Colonic mucosa (tissue), 4 donors: ENCODE measurements at regions of chr7 and their contacts with region 1.

Region 1: GRCh38 chr7:31160941-31161340 is 108.8 kb downstream of the ADCYAP1R1 start:
- DNase-seq: no peak
- H3K4me3 ChIP-seq: no peak overlapping the region
- H3K27ac ChIP-seq: no peak overlapping the region
- H3K4me1 ChIP-seq: no peaks in the 10 kb centered on the region
- H3K27me3 ChIP-seq: no peaks in the 10 kb centered on the region
- CTCF ChIP-seq: no peak

Region 2: DNA sequence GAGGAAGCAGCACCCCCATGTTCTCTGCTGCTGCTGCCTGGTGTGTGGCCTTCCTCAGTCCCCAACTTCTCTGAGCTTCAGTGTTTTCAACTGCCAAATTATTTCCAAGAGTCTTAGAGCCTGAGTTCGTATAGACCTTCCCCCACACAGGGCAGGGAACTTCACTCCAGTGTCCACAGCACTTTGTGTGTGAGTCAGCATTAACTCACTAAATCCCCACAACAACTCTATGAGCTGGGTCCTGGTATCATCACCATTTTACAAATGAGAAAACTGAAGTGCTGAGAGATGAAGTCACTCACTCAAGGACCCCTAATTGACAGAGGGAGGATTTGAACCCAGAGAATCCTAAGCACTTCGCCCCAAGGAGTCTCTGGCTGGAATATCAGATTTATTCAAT is 60.5 kb before region 1 on chr7:
- intact Hi-C with region 1: no loop called
- DNase-seq: no peak
- H3K4me3 ChIP-seq: no peak overlapping the region
- H3K27ac ChIP-seq: no peak overlapping the region
- H3K4me1 ChIP-seq: no peaks in the 10 kb centered on the region
- H3K27me3 ChIP-seq: no peaks in the 10 kb centered on the region
- CTCF ChIP-seq: no peak

Region 3: DNA sequence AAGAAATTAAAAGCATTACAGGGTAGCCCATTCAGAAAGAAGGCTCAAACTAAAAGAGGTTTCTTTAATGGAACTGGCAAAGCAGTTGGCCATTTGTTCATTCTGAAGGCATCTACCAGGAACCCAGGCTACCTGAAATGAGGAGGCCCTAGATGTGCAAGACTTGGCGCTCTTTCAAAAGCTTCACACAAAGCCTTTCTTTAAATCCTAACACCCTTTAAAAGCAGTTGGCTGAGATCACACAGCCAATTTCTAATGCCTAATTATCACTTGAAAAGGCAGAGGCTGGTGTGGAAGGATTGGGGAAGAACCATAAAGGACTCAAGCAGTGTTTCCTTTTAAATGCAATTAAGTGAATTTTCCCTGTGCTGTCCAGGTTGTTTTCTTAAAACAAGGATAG is 549.2 kb after region 1 on chr7:
- intact Hi-C with region 1: loop called (anchors 10 kb)
- DNase-seq: no peak
- H3K4me3 ChIP-seq: no peak overlapping the region
- H3K27ac ChIP-seq: no peak overlapping the region
- H3K4me1 ChIP-seq: no peaks in the 10 kb centered on the region
- H3K27me3 ChIP-seq: no peaks in the 10 kb centered on the region
- CTCF ChIP-seq: no peak

Region 4: DNA sequence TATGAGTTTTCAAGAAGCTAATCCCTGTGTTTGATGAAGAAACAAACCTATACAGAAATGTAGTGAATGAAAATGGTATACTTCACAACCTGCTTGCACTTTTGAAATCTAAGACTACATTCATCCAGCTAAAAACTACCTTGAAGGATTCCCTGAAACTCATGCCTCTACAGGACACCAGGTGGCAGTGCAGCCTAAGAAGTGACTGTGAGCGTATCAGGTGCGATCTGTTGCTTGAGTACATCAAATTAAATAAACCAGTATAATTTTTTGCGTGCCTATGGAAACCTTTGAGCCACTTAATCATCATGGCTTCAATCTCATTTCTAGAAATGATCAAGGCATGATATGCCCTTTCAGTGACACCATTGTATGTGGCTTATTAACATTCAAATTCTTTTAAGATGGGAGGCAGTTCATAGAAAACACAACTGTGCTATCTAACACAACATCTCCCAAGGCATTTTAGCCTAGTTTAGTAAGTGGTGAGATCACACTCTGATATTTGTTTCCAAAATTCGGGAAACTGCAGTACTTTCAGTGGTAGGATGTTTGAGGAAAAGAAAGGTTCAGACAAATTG is 583.4 kb after region 1 on chr7:
- intact Hi-C with region 1: no loop called
- DNase-seq: peak; percentile 63
- H3K4me3 ChIP-seq: no peak overlapping the region
- H3K27ac ChIP-seq: no peak overlapping the region
- H3K4me1 ChIP-seq: no peaks in the 10 kb centered on the region
- H3K27me3 ChIP-seq: no peaks in the 10 kb centered on the region
- CTCF ChIP-seq: peak; percentile 84